GM12878 (cell line): ENCODE measurements at regions of chr7 and their contacts with region 1.

Region 1: GRCh38 chr7:105238198-105238765 is 150.4 kb downstream of the SRPK2 start:
- DNase-seq: no peak
- ATAC-seq: no peak
- H3K4me3 ChIP-seq: no peak overlapping the region
- H3K27ac ChIP-seq: no peak overlapping the region
- H3K4me1 ChIP-seq: no peaks in the 10 kb centered on the region
- H3K27me3 ChIP-seq: no peaks in the 10 kb centered on the region
- CTCF ChIP-seq: no peak
- EP300 ChIP-seq: no peak
- POLR2A ChIP-seq: no peak
- RAD21 ChIP-seq: no peak

Region 2: GRCh38 chr7:105098863-105099515 is 139.3 kb before region 1 on chr7:
- CTCF ChIA-PET with region 1: no interaction called
- POLR2A ChIA-PET with region 1: no interaction called
- RAD21 ChIA-PET with region 1: no interaction called
- SMC1A ChIA-PET with region 1: no interaction called
- in situ Hi-C with region 1: no loop called
- intact Hi-C with region 1: no loop called
- DNase-seq: no peak
- ATAC-seq: peak; percentile 81
- H3K4me3 ChIP-seq: no peak overlapping the region
- H3K27ac ChIP-seq: no peak overlapping the region
- H3K4me1 ChIP-seq: peaks cover 26% of the 10 kb centered on the region; the same call in 1 of the 2 replicates
- H3K27me3 ChIP-seq: no peaks in the 10 kb centered on the region
- CTCF ChIP-seq: no peak
- EP300 ChIP-seq: 0 out of 4 replicates have a peak, but pooled peaks of 1 of the 2 experiments have one; percentile 34
- POLR2A ChIP-seq: no peak
- RAD21 ChIP-seq: no peak

Region 3: GRCh38 chr7:105249216-105249615 is 10.9 kb after region 1 on chr7:
- CTCF ChIA-PET with region 1: interaction called, 15 read pairs
- POLR2A ChIA-PET with region 1: interaction called, 3 read pairs
- RAD21 ChIA-PET with region 1: no interaction called
- SMC1A ChIA-PET with region 1: interaction called, 25 read pairs
- in situ Hi-C with region 1: no loop called
- intact Hi-C with region 1: no loop called
- DNase-seq: no peak
- ATAC-seq: no peak
- H3K4me3 ChIP-seq: no peak overlapping the region
- H3K27ac ChIP-seq: no peak overlapping the region
- H3K4me1 ChIP-seq: no peaks in the 10 kb centered on the region
- H3K27me3 ChIP-seq: no peaks in the 10 kb centered on the region
- CTCF ChIP-seq: no peak
- EP300 ChIP-seq: no peak
- POLR2A ChIP-seq: no peak
- RAD21 ChIP-seq: no peak